ENCODE measurements at regions of chr12 and their contacts with region 1.

Region 1: DNA sequence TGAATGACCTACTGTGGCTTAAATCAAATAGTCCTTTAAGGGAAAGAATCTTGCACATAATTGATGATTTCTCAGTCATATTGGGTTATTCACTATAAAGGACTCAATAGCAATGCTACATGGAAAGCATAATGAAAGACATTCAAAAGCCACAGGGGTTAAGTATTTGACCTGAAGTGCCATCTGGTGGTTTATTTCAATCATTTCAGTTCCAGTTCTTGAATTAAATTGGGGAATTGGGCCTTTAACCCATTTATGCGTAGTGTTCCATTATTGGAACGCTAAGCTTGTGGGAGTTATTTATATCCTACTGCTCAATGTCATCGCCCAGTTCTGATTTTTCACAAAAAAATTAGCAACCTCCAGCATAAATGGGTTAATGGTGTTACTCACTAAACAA is 41.3 kb upstream of the C12orf71 start:
- DNase-seq: peak in 3 of 14 experiments; percentile 13 to 16 (median 14)
- ATAC-seq: no peak
- H3K4me3 ChIP-seq: no peak overlapping the region
- H3K4me3 Mint-ChIP-seq: no peak overlapping the region
- H3K27ac ChIP-seq: no peak overlapping the region
- H3K27ac Mint-ChIP-seq: no peak overlapping the region
- H3K4me1 ChIP-seq: no peaks in the 10 kb centered on the region
- H3K4me1 Mint-ChIP-seq: no peaks in the 10 kb centered on the region
- H3K27me3 ChIP-seq: no peaks in the 10 kb centered on the region
- H3K27me3 Mint-ChIP-seq: no peaks in the 10 kb centered on the region
- CTCF ChIP-seq: peak; percentile 16

Region 2: DNA sequence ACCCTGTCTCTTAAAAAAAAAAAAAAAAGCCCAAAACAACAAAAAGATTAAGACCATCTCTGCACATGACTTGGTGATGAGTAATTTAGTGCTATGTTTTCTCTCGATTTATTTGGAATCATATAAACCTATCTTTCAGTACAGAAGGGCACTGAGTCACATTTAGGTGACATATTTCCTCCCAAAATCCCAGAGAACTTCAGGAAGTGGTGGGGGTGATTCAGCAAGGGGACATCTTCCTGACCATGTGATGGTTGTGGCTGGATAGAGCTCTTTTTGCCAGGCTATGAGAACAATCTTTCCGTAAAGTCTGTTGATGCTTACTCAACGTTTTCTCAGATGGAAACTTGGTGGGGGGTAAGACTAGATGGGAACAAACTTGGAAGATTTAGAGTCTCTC is 450.3 kb after region 1 on chr12:
- CTCF ChIA-PET with region 1: no interaction called
- POLR2A ChIA-PET with region 1: no interaction called
- intact Hi-C with region 1: no loop called
- DNase-seq: no peak
- ATAC-seq: no peak
- H3K4me3 ChIP-seq: no peak overlapping the region
- H3K4me3 Mint-ChIP-seq: no peak overlapping the region
- H3K27ac ChIP-seq: no peak overlapping the region
- H3K27ac Mint-ChIP-seq: no peak overlapping the region
- H3K4me1 ChIP-seq: no peaks in the 10 kb centered on the region
- H3K4me1 Mint-ChIP-seq: peaks cover 10% of the 10 kb centered on the region
- H3K27me3 ChIP-seq: no peaks in the 10 kb centered on the region
- H3K27me3 Mint-ChIP-seq: no peaks in the 10 kb centered on the region
- CTCF ChIP-seq: no peak

Region 3: GRCh38 chr12:27635349-27635972 is 511.8 kb after region 1 on chr12:
- CTCF ChIA-PET with region 1: no interaction called
- POLR2A ChIA-PET with region 1: no interaction called
- intact Hi-C with region 1: loop called (anchors 5 kb)
- DNase-seq: peak in 2 of 14 experiments; percentile 5 to 22
- ATAC-seq: no peak
- H3K4me3 ChIP-seq: no peak overlapping the region
- H3K4me3 Mint-ChIP-seq: no peak overlapping the region
- H3K27ac ChIP-seq: no peak overlapping the region
- H3K27ac Mint-ChIP-seq: no peak overlapping the region
- H3K4me1 ChIP-seq: no peaks in the 10 kb centered on the region
- H3K4me1 Mint-ChIP-seq: no peaks in the 10 kb centered on the region
- H3K27me3 ChIP-seq: no peaks in the 10 kb centered on the region
- H3K27me3 Mint-ChIP-seq: no peaks in the 10 kb centered on the region
- CTCF ChIP-seq: peak; percentile 15